Aorta (tissue), 5 donors: ENCODE measurements at regions of chr7 and their contacts with region 1.

Region 1: GRCh38 chr7:30116771-30117170 is 18.0 kb upstream of the MTURN start:
- DNase-seq: peak; percentile 77 to 83
- ATAC-seq: peak; percentile 82
- H3K4me3 ChIP-seq: no peak overlapping the region
- H3K27ac ChIP-seq: peak overlapping the region in 1 of 2 donors; percentile 68
- H3K4me1 ChIP-seq: peaks cover 0 to 2% of the 10 kb centered on the region in 2 donors
- H3K27me3 ChIP-seq: no peaks in the 10 kb centered on the region

Region 2: DNA sequence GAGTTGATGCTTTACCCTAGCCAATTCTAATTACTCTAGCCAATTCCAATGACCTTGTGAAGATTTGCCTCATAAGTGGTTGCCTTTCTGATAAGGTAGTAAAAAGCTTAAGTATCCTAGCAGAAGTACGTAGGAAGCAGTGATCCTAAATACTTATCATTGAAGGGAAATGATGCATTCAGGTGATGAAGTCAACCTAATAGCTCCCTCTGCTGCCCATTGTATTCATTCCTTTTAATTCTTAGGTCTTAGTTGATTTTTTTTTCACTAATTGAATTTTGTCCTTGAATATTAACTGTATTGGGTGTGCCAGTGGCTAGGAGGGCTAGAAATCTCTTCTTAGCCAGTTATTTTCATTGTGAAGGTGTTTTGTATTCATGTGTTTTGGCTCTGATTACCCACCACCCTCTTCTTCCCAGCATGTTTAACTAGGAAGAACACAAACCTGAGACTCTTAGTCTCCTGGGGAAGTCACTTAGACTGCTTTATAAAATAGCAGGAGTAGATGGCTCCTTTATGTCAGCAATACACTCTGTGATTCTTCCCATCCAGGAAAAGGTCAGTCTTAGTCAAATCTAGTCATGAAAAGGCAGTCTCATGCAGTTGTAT is 42.2 kb before region 1 on chr7:
- intact Hi-C with region 1: loop called in 1 of 2 experiments (anchors 5 kb)
- DNase-seq: no peak
- ATAC-seq: no peak
- H3K4me3 ChIP-seq: no peak overlapping the region
- H3K27ac ChIP-seq: no peak overlapping the region
- H3K4me1 ChIP-seq: no peaks in the 10 kb centered on the region
- H3K27me3 ChIP-seq: no peaks in the 10 kb centered on the region